ENCODE measurements at regions of chr11 and their contacts with region 1.

Region 1: GRCh38 chr11:117127171-117127901 is 16.8 kb upstream of the PAFAH1B2 start:
- DNase-seq: no peak
- H3K4me3 ChIP-seq: no peak overlapping the region
- H3K27ac ChIP-seq: no peak overlapping the region
- H3K4me1 ChIP-seq: no peaks in the 10 kb centered on the region
- H3K27me3 ChIP-seq: no peaks in the 10 kb centered on the region
- CTCF ChIP-seq: no peak
- POLR2A ChIP-seq: no peak

Region 2: GRCh38 chr11:117045196-117045595 is 82.1 kb before region 1 on chr11:
- intact Hi-C with region 1: no loop called
- DNase-seq: no peak
- H3K4me3 ChIP-seq: no peak overlapping the region
- H3K27ac ChIP-seq: no peak overlapping the region
- H3K4me1 ChIP-seq: peaks cover 47% of the 10 kb centered on the region
- H3K27me3 ChIP-seq: no peaks in the 10 kb centered on the region
- CTCF ChIP-seq: no peak
- POLR2A ChIP-seq: no peak

Region 3: GRCh38 chr11:117189191-117189930 is 62.0 kb after region 1 on chr11:
- intact Hi-C with region 1: no loop called
- DNase-seq: no peak
- H3K4me3 ChIP-seq: no peak overlapping the region
- H3K27ac ChIP-seq: no peak overlapping the region
- H3K4me1 ChIP-seq: no peaks in the 10 kb centered on the region
- H3K27me3 ChIP-seq: no peaks in the 10 kb centered on the region
- CTCF ChIP-seq: no peak
- POLR2A ChIP-seq: no peak

Region 4: DNA sequence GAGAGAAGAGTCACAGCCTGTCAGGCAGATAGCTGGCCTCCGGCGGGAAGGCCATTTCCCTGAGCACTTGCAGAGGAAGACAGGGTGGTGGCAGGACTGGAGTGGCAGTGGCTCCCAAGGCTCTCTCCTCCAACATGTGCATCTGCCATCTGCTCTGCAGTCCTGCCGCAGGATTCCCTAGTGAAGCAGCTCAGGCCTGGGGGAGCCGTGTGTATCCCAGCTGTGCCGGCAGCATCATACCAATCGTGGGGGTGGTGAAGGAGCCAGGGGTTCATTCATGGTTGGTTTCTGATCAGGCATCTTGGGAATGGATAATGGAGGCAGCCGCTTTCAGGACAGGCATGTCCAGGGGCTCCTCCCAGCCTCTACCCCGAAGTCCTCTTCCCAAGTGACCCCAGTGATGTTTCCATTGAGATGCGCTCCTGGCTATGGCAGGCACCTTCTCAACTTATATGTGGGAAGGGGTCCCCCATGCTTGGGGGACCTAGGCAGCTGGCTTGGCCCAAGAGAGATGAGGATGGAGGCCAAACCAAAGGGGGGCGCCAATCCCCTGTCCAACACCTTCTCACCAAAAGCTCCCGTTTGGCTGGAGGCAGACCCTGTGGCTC is 78.0 kb after region 1 on chr11:
- intact Hi-C with region 1: loop called (anchors 2 kb)
- DNase-seq: no peak
- H3K4me3 ChIP-seq: no peak overlapping the region
- H3K27ac ChIP-seq: peak overlapping the region; percentile 78
- H3K4me1 ChIP-seq: no peaks in the 10 kb centered on the region
- H3K27me3 ChIP-seq: no peaks in the 10 kb centered on the region
- CTCF ChIP-seq: no peak
- POLR2A ChIP-seq: no peak

Measured in vagina (tissue), 2 donors.